CD8-positive, alpha-beta T cell (primary cell): ENCODE measurements at regions of chr9 and their contacts with region 1.

Region 1: GRCh38 chr9:97632985-97633858 is at the starts of genes NCBP1 and TSTD2:
- DNase-seq: peak; percentile 89 to 98 (median 95)
- ATAC-seq: peak; percentile 86
- H3K4me3 ChIP-seq: peak within 1 kb of the TSS; percentile 96 to 97
- H3K4me3 Mint-ChIP-seq: peak within 1 kb of the TSS; percentile 96
- H3K27ac ChIP-seq: peak within 1 kb of the TSS; percentile 88 to 97
- H3K27ac Mint-ChIP-seq: peak within 1 kb of the TSS; percentile 99
- H3K4me1 ChIP-seq: peaks cover 45% of the 10 kb centered on the region
- H3K4me1 Mint-ChIP-seq: peaks cover 57% of the 10 kb centered on the region
- H3K27me3 ChIP-seq: no peaks in the 10 kb centered on the region
- H3K27me3 Mint-ChIP-seq: no peaks in the 10 kb centered on the region
- CTCF ChIP-seq: no peak
- total RNA-seq, gene NCBP1: 50.7 to 58.5 TPM
- total RNA-seq, gene TSTD2: 34.3 to 40.8 TPM

Region 2: GRCh38 chr9:96777426-96777864 is 855.8 kb before region 1 on chr9:
- CTCF ChIA-PET with region 1: no interaction called
- POLR2A ChIA-PET with region 1: no interaction called
- intact Hi-C with region 1: loop called in 1 of 2 experiments (anchors 2 kb)
- DNase-seq: no peak
- ATAC-seq: no peak
- H3K4me3 ChIP-seq: peak overlapping the region; percentile 54 to 70
- H3K4me3 Mint-ChIP-seq: peak overlapping the region; percentile 97
- H3K27ac ChIP-seq: peak overlapping the region; percentile 76 to 77
- H3K27ac Mint-ChIP-seq: peak overlapping the region; percentile 99
- H3K4me1 ChIP-seq: peaks cover 14% of the 10 kb centered on the region
- H3K4me1 Mint-ChIP-seq: peaks cover 52% of the 10 kb centered on the region
- H3K27me3 ChIP-seq: no peaks in the 10 kb centered on the region
- H3K27me3 Mint-ChIP-seq: no peaks in the 10 kb centered on the region
- CTCF ChIP-seq: no peak

Region 3: DNA sequence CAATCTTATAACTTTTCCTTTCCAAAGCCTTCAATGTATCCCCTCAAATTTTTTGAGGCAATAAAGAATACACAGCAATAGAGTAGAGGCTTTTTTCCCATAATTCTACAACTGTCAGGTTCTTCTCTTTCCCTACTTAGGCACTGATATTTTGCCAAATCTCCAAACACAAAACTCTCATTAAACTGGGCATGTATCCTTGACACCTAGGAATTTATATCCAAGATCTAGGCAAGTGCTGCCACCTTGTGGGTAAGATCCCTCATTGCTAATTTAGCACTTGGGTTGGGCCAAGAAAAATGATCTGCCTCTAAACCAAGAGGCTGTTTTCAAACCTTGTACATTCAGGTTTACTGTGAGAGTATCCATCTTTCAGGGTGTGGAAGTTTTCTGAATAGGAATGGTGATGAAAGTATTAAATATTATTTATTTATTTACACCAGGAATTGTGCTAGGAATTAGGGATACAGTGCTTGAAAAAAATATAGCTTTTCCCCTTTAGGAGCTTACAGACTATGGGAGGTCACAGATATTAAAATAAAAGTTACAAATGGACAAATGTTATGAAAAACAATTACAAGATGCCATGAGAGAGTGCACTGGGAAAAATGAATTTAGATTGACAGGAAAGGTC is 17.7 kb before region 1 on chr9:
- CTCF ChIA-PET with region 1: interaction called, 17 read pairs
- POLR2A ChIA-PET with region 1: interaction called, 8 read pairs
- intact Hi-C with region 1: loop called in 1 of 2 experiments (anchors 1 kb)
- DNase-seq: peak in 8 of 9 experiments; percentile 22 to 74 (median 58)
- ATAC-seq: peak; percentile 67
- H3K4me3 ChIP-seq: no peak overlapping the region
- H3K4me3 Mint-ChIP-seq: no peak overlapping the region
- H3K27ac ChIP-seq: no peak overlapping the region
- H3K27ac Mint-ChIP-seq: no peak overlapping the region
- H3K4me1 ChIP-seq: no peaks in the 10 kb centered on the region
- H3K4me1 Mint-ChIP-seq: peaks cover 2% of the 10 kb centered on the region
- H3K27me3 ChIP-seq: no peaks in the 10 kb centered on the region
- H3K27me3 Mint-ChIP-seq: no peaks in the 10 kb centered on the region
- CTCF ChIP-seq: peak; percentile 97

Region 4: GRCh38 chr9:97803167-97804058 is 170.2 kb after region 1 on chr9:
- CTCF ChIA-PET with region 1: no interaction called
- POLR2A ChIA-PET with region 1: no interaction called
- intact Hi-C with region 1: loop called (anchors 5 kb)
- DNase-seq: peak; percentile 47 to 86 (median 77)
- ATAC-seq: peak; percentile 97
- H3K4me3 ChIP-seq: peak overlapping the region; percentile 43 to 56
- H3K4me3 Mint-ChIP-seq: peak overlapping the region; percentile 81
- H3K27ac ChIP-seq: no peak overlapping the region
- H3K27ac Mint-ChIP-seq: peak overlapping the region; percentile 42
- H3K4me1 ChIP-seq: peaks cover 7% of the 10 kb centered on the region
- H3K4me1 Mint-ChIP-seq: peaks cover 5% of the 10 kb centered on the region
- H3K27me3 ChIP-seq: peaks cover 3 to 5% of the 10 kb centered on the region in 2 experiments
- H3K27me3 Mint-ChIP-seq: peaks cover 13% of the 10 kb centered on the region
- CTCF ChIP-seq: no peak

Region 5: DNA sequence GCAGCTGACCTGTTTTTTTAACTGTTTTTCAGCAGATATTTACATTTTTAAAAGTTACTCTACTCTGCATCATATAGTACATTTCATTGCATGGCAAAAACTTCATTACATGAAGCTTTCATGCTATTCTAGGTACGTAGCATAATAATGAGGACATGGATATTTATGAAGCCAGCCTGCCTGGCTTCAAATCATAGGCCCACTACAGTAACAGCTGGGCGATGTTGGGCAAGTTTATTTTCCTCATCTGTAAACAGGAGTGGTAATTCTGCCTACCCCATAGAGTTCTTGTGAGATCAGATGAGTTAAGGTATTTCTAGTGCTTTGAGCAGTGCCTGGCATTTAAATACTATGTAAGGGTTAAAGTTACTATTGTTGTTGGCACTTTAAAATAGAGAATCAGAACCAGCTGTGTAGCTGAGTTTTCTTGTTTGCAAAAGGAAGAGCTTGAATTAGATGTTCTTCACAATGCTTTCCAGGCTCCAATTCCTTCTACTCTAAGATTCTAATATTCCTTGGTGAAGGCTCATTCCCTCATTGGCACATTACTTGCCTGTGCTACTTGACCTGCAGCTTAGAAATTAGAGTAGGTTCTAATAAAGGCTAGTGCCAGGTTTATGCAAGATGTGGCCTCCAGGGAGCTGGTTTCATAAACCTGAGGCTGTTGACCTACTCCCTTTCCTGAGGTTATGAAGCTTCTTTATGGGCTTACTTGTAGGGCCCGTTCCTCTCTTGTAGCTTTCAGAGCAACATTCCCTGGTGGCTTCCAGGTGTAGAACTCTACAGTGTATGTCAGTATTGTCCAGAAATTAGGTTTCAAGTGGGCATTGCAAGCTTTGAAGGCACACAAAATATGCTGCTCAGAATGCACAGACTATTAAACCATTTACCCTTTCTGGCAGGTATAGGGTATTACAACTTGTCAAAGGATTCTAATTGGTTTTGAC is 364.4 kb after region 1 on chr9:
- CTCF ChIA-PET with region 1: no interaction called
- POLR2A ChIA-PET with region 1: no interaction called
- intact Hi-C with region 1: no loop called
- DNase-seq: no peak
- ATAC-seq: no peak
- H3K4me3 ChIP-seq: no peak overlapping the region
- H3K4me3 Mint-ChIP-seq: no peak overlapping the region
- H3K27ac ChIP-seq: peak overlapping the region in 1 of 2 experiments; percentile 3
- H3K27ac Mint-ChIP-seq: no peak overlapping the region
- H3K4me1 ChIP-seq: peaks cover 18% of the 10 kb centered on the region
- H3K4me1 Mint-ChIP-seq: peaks cover 61% of the 10 kb centered on the region
- H3K27me3 ChIP-seq: no peaks in the 10 kb centered on the region
- H3K27me3 Mint-ChIP-seq: no peaks in the 10 kb centered on the region
- CTCF ChIP-seq: no peak

Region 6: GRCh38 chr9:98202252-98202651 is 569.0 kb after region 1 on chr9:
- CTCF ChIA-PET with region 1: no interaction called
- POLR2A ChIA-PET with region 1: no interaction called
- intact Hi-C with region 1: loop called in 1 of 2 experiments (anchors 1 kb)
- DNase-seq: no peak
- ATAC-seq: no peak
- H3K4me3 ChIP-seq: no peak overlapping the region
- H3K4me3 Mint-ChIP-seq: no peak overlapping the region
- H3K27ac ChIP-seq: no peak overlapping the region
- H3K27ac Mint-ChIP-seq: no peak overlapping the region
- H3K4me1 ChIP-seq: no peaks in the 10 kb centered on the region
- H3K4me1 Mint-ChIP-seq: peaks cover 5% of the 10 kb centered on the region
- H3K27me3 ChIP-seq: no peaks in the 10 kb centered on the region
- H3K27me3 Mint-ChIP-seq: no peaks in the 10 kb centered on the region
- CTCF ChIP-seq: no peak